Uterus (tissue), 4 donors: ENCODE measurements at regions of chr2 and their contacts with region 1.

Region 1: DNA sequence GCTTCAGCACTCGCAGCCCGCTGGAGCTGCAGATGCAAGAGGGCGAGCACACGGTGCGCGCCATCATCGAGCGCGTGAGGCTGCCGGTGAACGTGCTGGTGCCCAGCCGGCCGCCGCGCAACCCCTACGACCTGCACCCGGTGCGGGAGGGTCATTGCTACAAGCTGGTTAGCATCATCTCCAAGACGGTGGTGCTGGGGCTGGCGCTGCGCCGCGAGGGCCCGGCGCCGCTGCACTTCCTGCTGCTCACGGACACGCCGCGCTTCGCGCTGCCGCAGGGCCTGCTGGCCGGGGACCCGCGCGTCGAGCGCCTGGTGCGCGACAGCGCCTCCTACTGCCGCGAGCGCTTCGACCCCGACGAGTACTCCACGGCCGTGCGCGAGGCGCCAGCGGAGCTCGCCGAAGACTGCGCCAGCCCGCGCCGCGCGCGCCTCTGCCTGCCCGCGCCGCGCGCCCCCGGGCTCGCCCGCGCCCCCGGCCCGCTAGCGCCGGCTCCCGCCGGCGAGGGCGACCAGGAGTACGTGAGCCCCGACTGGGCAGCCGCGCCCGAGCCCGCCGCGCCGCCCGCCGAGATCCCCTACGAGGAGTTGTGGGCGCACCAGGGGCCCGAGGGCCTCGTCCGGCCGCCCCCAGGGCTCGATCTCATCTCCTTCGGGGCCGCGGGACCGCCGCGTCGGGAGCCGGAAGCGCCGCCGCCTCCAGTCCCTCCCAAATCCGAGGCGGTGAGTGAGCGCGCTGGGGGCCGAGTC is 11.8 kb downstream of the GAREM2 start:
- DNase-seq: peak; percentile 77 to 90
- H3K4me3 ChIP-seq: peak overlapping the region; percentile 43 to 56
- H3K27ac ChIP-seq: peak overlapping the region; percentile 64 to 78
- H3K4me1 ChIP-seq: no peaks in the 10 kb centered on the region
- H3K27me3 ChIP-seq: no peaks in the 10 kb centered on the region
- CTCF ChIP-seq: peak; percentile 24 to 91 (median 79)
- POLR2A ChIP-seq: peak in 1 of 2 donors; percentile 20

Region 2: DNA sequence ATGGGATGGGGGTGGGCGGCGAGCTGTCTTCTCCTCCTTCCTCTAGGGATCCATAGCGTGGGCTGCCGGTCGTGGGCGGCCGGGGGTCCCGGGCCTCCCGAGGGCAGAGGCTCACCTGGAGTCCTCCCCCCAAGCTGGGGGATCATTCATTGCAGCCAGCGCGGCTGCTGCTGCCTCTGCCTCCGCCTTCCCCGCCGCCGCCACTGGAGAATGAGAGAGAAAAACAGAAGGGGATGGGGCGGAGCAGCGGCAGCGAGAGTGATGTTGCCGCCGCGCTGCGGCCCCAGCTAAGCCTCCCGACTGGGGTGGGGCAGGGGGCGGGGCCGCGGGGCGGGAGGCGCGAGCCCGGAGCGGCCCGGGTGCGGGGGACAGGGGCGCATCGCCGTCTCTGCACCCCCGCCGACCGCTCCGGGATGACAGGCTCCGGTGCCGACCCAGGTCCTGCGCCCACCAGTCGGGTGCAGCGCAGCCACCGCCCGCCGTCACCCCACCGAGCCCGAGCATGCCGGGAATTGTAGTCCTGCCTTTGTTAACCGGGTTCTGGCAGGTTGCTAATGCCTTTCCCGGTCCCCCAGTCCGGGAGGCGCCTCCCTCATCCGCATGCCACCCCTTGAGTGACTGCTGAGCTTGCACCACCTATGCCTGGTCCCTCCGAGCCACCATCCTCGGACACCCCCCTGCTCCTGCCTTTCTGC is 202.3 kb before region 1 on chr2 and contains the start of gene KIF3C:
- intact Hi-C with region 1: loop called (anchors 10 kb)
- DNase-seq: peak; percentile 62 to 70
- H3K4me3 ChIP-seq: peak within 1 kb of the TSS; percentile 68 to 89
- H3K27ac ChIP-seq: peak within 1 kb of the TSS; percentile 69 to 77
- H3K4me1 ChIP-seq: peaks cover 0 to 5% of the 10 kb centered on the region in 2 donors
- H3K27me3 ChIP-seq: no peaks in the 10 kb centered on the region
- CTCF ChIP-seq: no peak
- POLR2A ChIP-seq: no peak
- total RNA-seq, gene KIF3C: 3.5 to 12.6 (median 7.4) TPM

Region 3: DNA sequence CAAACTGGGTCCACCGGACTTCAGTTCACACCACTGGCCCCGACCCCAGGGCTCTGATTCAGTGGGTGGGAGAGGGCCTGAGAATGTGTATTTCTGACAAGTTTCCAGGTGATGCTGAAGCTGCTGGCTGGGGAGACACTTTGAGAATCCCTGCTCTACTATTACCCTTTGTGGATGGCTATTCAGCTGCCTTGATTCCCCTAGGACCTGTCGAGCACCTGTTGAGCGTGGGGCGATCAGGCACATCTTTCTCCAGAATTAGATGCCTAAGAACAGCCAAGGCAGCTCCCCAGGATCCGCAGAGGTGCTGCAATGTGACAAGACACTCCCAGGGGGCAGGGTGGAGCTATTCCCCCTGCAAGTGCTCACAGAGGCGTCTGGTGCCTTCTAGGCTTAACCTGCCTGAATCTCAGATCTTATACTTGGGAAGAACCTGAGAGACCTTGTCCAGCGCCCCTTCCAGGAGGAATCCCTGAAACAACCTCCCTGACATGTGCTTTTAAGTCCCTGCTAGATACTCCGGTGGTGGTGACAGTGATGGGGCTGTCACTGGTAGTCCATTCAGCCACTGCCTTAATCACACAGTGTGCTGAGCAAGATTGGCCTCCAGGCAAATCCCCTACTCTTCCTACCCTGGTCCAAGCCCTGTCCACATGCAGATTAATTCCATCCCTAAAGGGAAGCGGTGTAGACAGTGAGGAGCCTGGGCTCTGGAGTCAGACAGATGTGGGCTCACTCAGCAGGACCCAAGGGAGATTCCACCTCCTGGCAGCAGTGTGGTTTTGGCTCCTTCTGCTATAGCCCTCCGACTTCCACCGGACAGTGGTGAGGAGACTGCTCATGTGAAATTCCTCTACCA is 336.6 kb after region 1 on chr2:
- intact Hi-C with region 1: no loop called
- DNase-seq: no peak
- H3K4me3 ChIP-seq: no peak overlapping the region
- H3K27ac ChIP-seq: no peak overlapping the region
- H3K4me1 ChIP-seq: no peaks in the 10 kb centered on the region
- H3K27me3 ChIP-seq: no peaks in the 10 kb centered on the region
- CTCF ChIP-seq: no peak
- POLR2A ChIP-seq: no peak